Breast epithelium (tissue), 4 donors: ENCODE measurements at regions of chr12 and their contacts with region 1.

Region 1: DNA sequence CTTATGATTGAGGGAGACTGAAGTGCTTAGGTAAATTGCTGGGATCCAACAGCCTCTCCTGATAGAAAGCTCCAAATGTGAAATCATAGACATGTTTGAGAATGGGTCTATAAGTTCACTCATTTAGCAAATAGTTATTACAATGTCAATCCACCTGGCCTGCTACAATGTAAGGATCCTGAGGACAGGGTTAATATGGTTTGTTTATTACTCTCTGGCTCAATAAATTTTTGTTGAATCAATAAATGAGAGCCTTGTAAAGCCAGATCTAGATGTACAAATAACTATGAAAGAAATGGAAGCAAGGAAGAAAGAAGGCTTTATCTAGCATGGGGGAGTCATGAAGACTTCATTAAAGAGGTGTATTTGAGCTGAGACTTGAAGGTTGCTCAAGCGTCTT is 165.6 kb upstream of the IGF1 start:
- DNase-seq: no peak
- H3K4me3 ChIP-seq: no peak overlapping the region
- H3K27ac ChIP-seq: no peak overlapping the region
- H3K4me1 ChIP-seq: no peaks in the 10 kb centered on the region
- H3K27me3 ChIP-seq: no peaks in the 10 kb centered on the region
- CTCF ChIP-seq: no peak
- POLR2A ChIP-seq: no peak

Region 2: DNA sequence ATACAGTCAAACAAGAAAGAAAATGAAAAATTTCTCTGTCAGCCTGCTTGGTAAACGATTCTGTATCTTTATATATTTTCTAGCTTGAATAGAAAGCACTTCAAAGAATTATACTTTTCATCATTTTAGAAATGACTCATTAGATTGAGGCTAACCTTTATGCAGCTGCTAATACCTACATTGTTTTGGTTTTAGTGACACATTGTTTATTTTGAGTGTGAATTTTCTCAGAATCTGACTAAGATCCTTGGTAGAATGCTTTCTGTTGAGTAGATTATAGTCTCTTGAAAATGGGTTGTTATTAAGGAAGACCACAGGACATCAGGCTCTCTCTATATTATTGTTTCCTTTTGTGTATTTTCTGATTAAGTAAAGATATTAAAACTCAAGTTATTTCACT is 448.2 kb before region 1 on chr12 and contains the start of gene PMCH:
- intact Hi-C with region 1: loop called (anchors 5 kb)
- DNase-seq: no peak
- H3K4me3 ChIP-seq: no peak within 1 kb of the TSS
- H3K27ac ChIP-seq: no peak within 1 kb of the TSS
- H3K4me1 ChIP-seq: no peaks in the 10 kb centered on the region
- H3K27me3 ChIP-seq: no peaks in the 10 kb centered on the region
- CTCF ChIP-seq: no peak
- POLR2A ChIP-seq: no peak
- total RNA-seq, gene PMCH: not detected